ENCODE measurements at regions of chr16 and their contacts with region 1.

Region 1: GRCh38 chr16:58392215-58393137 is at the start of gene GINS3:
- DNase-seq: peak; percentile 12 to 93
- H3K4me3 ChIP-seq: peak within 1 kb of the TSS; percentile 87 to 92
- H3K27ac ChIP-seq: peak within 1 kb of the TSS; percentile 58 to 64
- H3K4me1 ChIP-seq: no peaks in the 10 kb centered on the region
- H3K27me3 ChIP-seq: no peaks in the 10 kb centered on the region
- CTCF ChIP-seq: no peak
- total RNA-seq, gene GINS3: 21.8 TPM

Region 2: GRCh38 chr16:58249780-58250478 is 142.5 kb before region 1 on chr16:
- intact Hi-C with region 1: loop called (anchors 2 kb)
- DNase-seq: peak; percentile 16 to 86
- H3K4me3 ChIP-seq: peak overlapping the region; percentile 77 to 78
- H3K27ac ChIP-seq: peak overlapping the region; percentile 52 to 73
- H3K4me1 ChIP-seq: peaks cover 3 to 9% of the 10 kb centered on the region in 2 donors
- H3K27me3 ChIP-seq: no peaks in the 10 kb centered on the region
- CTCF ChIP-seq: no peak

Region 3: DNA sequence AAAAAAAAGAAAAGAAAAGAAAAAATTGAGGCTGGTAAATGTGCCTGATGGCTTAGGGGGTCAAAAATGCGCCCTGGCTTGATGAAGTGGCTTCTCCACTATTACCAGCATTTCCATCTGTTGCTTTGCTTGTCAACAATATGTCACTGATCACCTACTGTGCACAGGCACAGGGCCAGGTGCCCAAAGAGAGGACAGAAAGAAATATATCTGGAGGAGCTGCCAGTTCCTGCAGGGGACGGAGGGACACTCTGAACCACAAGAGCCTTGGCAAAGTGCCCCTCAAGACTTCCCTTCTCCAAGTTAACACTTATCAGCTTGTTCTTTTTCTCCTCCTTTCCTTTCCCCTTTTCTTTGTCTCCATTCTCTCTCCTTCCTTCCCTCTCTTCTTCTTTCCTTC is 34.5 kb after region 1 on chr16:
- intact Hi-C with region 1: no loop called
- DNase-seq: no peak
- H3K4me3 ChIP-seq: no peak overlapping the region
- H3K27ac ChIP-seq: no peak overlapping the region
- H3K4me1 ChIP-seq: no peaks in the 10 kb centered on the region
- H3K27me3 ChIP-seq: no peaks in the 10 kb centered on the region
- CTCF ChIP-seq: no peak